ENCODE measurements at regions of chr3 and their contacts with region 1.

Region 1: DNA sequence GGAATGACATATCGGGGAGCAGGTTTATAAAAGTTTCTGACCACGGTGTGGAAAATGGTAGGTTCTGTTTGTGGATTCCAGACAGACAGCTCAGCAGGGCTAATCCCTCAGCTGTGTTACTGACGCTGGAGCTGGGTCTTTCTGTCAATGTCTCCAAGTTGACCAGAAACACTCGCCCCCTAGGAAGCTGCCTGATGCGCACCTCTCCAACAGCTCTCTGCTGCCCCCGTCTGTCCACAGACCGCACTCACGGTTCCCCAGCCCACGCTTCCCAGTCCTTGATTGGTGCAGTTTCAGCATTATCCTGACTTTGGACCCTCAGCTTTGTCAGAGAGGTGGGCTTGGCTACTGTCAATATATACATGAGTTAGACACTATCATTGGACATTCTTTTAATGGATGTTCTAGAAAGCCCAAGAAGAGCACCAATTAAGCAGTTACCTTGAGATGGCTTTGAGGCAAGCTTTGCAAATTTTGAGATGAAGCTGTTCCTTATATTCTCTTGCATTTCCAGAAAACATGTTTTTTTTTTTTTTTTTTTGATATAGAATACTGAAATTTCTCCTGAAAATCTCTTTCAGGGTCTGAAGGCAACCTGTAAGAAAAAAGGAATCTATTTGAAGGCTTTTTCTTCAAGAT is 98.9 kb upstream of the TBC1D5 start:
- DNase-seq: peak; percentile 23
- H3K4me3 ChIP-seq: no peak overlapping the region
- H3K27ac ChIP-seq: no peak overlapping the region
- H3K4me1 ChIP-seq: no peaks in the 10 kb centered on the region
- H3K27me3 ChIP-seq: no peaks in the 10 kb centered on the region
- CTCF ChIP-seq: peak; percentile 98

Region 2: DNA sequence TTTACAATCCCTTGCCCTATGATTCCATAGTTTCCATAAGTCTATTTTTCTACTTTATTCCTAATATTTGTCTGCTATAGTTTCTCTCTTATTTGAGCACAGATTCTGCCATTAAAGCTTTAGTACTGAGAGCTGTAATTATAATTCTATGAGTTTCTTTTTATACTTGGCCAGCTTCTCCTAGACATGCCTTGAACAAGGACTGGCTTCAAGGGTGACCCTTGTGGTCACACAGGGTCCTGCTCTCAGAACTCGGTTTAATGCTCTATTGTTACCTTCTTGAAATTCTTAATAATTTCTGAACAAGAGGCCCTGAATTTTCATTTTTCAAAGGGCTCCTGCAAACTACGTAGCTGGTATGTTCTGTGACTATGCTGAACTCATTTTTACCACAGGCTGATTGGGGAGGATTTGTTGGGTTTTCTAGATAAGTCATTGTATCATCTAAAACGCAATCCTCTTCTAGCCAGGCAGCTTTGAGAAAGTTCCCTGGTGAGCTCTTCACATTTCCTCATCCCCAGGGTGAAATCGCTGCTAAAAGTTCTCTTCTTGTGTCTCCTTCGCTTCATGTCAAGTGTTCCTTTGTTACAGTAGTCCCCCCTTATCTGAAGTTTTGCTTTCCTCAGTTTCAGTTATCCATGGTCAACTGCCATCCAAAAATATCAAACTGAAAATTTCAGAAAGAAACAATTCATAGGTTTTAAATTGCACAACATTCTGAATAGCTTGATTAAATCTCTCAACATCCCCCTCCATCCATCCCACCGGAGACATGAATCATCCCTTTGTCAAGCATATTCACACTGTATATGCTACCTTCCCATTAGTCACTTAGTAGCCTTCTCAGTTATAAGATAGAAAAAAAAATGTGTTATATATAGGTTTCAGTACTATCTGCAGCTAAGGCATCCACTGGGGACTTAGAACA is 969.1 kb before region 1 on chr3:
- CTCF ChIA-PET with region 1: no interaction called
- dilution Hi-C with region 1: no loop called
- in situ Hi-C with region 1: no loop called
- intact Hi-C with region 1: no loop called
- DNase-seq: no peak
- H3K4me3 ChIP-seq: no peak overlapping the region
- H3K27ac ChIP-seq: no peak overlapping the region
- H3K4me1 ChIP-seq: no peaks in the 10 kb centered on the region
- H3K27me3 ChIP-seq: peaks cover 3% of the 10 kb centered on the region
- CTCF ChIP-seq: no peak

Region 3: GRCh38 chr3:17258823-17259436 is 582.4 kb before region 1 on chr3:
- CTCF ChIA-PET with region 1: no interaction called
- dilution Hi-C with region 1: no loop called
- in situ Hi-C with region 1: loop called in 1 of 2 experiments (anchors 25 kb)
- intact Hi-C with region 1: loop called (anchors 10 kb)
- DNase-seq: peak; percentile 12
- H3K4me3 ChIP-seq: no peak overlapping the region
- H3K27ac ChIP-seq: no peak overlapping the region
- H3K4me1 ChIP-seq: no peaks in the 10 kb centered on the region
- H3K27me3 ChIP-seq: no peaks in the 10 kb centered on the region
- CTCF ChIP-seq: peak; percentile 66 to 70

Region 4: DNA sequence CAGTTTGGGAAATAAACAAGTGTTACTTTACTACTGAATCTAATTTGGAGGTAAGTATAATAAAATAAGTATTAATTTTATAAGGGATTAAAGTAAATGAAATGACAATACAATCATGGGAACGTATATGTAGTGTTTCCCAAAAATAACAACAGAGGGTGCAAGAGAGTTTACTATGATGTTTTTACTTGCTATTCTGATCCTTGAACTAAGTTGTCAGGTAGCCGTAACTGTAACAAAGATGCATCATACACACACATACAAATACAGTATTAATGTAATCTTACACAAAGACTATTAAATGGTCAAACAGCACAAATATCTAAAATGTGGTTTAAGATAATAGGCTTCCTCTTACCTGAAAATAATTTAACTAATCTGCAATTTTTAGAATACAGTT is 410.3 kb before region 1 on chr3:
- CTCF ChIA-PET with region 1: no interaction called
- dilution Hi-C with region 1: loop called (anchors 25 kb)
- in situ Hi-C with region 1: loop called (anchors 25 kb)
- intact Hi-C with region 1: loop called (anchors 1 kb)
- DNase-seq: peak; percentile 23
- H3K4me3 ChIP-seq: no peak overlapping the region
- H3K27ac ChIP-seq: no peak overlapping the region
- H3K4me1 ChIP-seq: no peaks in the 10 kb centered on the region
- H3K27me3 ChIP-seq: no peaks in the 10 kb centered on the region
- CTCF ChIP-seq: peak; percentile 32 to 53

Region 5: DNA sequence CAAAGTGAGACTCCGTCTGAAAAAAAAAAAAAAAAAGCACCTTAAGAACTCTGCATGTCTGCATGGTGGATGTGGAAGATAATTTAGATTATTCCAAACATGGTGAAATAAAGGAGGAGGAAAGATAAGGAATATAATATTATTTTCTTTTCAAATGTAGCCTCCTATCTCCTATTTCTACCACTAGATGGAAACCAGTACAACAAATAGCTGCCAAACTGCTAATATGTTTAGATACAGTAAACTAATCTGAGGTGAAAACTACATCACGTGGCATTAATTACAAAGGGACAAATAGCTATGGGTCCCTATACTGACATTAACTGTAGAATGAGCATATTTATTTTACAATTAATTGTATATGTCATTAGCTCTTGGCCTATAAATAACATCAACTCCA is 296.7 kb before region 1 on chr3:
- CTCF ChIA-PET with region 1: interaction called, 3 read pairs
- dilution Hi-C with region 1: no loop called
- in situ Hi-C with region 1: no loop called
- intact Hi-C with region 1: loop called (anchors 1 kb)
- DNase-seq: no peak
- H3K4me3 ChIP-seq: no peak overlapping the region
- H3K27ac ChIP-seq: no peak overlapping the region
- H3K4me1 ChIP-seq: no peaks in the 10 kb centered on the region
- H3K27me3 ChIP-seq: no peaks in the 10 kb centered on the region
- CTCF ChIP-seq: peak; percentile 16 to 25

Region 6: DNA sequence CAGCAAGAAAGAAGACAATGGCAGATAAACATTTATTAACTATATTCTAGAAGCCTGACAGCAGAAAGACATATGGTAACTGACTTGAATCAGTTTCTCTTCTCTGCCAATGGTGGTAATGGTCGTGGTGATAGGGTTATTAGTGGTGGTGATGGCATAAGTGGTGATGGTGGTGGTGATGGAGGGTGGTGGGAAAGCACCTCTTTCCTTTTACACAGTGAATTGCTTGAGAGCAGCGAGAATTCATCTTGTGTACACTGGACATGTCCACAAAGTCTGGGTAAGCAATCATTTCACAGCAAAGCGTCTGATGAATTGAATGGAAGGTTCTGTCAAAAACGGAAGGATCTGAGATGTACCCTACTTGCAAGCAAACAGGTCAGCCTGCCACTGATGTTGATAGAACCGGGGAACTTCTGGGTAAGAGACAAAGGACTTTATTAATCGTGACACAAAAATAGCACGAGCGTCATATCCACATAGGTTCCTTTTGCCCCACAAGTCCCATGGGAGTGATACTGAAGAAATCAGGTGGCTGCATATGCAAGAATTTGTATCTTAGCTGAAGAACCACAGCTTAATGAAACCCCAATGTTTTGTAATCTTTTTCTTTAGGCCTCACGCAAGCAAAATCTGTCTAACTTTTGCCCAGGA is 75.4 kb before region 1 on chr3:
- CTCF ChIA-PET with region 1: interaction called, 10 read pairs
- dilution Hi-C with region 1: no loop called
- in situ Hi-C with region 1: no loop called
- intact Hi-C with region 1: no loop called
- DNase-seq: no peak
- H3K4me3 ChIP-seq: no peak overlapping the region
- H3K27ac ChIP-seq: no peak overlapping the region
- H3K4me1 ChIP-seq: no peaks in the 10 kb centered on the region
- H3K27me3 ChIP-seq: no peaks in the 10 kb centered on the region
- CTCF ChIP-seq: no peak

Region 7: DNA sequence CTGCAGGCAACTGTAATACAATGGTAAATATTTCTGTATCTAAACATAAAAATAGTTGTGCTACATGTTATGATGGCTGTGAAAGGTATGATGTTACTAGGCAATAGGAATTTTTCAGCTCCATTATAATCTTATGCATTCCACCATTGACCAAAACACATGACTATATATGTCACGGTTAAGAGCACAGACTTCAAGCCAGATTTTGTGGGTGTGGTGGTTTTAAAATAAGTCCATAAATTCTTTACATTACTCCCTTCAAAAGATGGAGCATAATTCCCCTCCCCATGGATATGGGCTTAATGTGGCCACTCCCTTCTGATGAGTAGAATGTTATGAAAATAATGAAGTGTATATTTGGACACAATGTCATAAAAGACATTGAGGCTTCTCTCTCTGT is 10.5 kb before region 1 on chr3:
- CTCF ChIA-PET with region 1: no interaction called
- dilution Hi-C with region 1: no loop called
- in situ Hi-C with region 1: no loop called
- intact Hi-C with region 1: no loop called
- DNase-seq: no peak
- H3K4me3 ChIP-seq: no peak overlapping the region
- H3K27ac ChIP-seq: no peak overlapping the region
- H3K4me1 ChIP-seq: peaks cover 24% of the 10 kb centered on the region
- H3K27me3 ChIP-seq: no peaks in the 10 kb centered on the region
- CTCF ChIP-seq: no peak